ENCODE measurements at regions of chr12 and their contacts with region 1.

Region 1: DNA sequence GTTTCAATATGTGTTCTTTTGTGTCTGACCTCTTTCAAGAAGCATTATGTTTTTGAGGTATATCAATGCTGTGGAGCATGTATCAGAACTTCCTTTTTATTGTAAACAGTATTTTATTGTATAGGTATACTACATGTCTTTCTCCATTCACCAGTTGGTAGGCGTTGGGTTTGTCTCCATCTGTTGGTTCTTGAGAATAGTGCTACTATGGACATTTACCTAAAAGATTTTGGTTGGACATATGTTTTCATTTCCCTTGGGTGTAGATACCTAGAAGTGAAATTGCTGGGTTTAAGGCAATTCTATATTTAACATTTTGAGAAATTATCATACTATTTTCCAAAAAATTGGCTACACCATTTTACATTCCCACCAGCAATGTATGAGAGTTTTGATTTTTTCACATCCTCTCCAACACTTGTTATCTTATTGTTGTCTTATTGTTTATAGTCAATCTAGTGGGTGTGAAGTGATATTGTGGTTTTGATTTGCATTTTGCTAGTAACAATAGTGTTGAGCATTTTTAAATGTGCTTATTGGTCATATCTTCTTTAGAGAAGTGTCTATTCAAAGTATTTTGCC is 409.2 kb downstream of the IPO8 start:
- DNase-seq: peak; percentile 16
- H3K4me3 ChIP-seq: no peak overlapping the region
- H3K27ac ChIP-seq: no peak overlapping the region
- H3K4me1 ChIP-seq: no peaks in the 10 kb centered on the region
- H3K27me3 ChIP-seq: no peaks in the 10 kb centered on the region
- CTCF ChIP-seq: peak; percentile 69 to 75

Region 2: GRCh38 chr12:30000401-30000800 is 286.0 kb before region 1 on chr12:
- CTCF ChIA-PET with region 1: no interaction called
- dilution Hi-C with region 1: no loop called
- in situ Hi-C with region 1: no loop called
- intact Hi-C with region 1: loop called (anchors 1 kb)
- DNase-seq: no peak
- H3K4me3 ChIP-seq: no peak overlapping the region
- H3K27ac ChIP-seq: no peak overlapping the region
- H3K4me1 ChIP-seq: no peaks in the 10 kb centered on the region
- H3K27me3 ChIP-seq: no peaks in the 10 kb centered on the region
- CTCF ChIP-seq: no peak

Region 3: DNA sequence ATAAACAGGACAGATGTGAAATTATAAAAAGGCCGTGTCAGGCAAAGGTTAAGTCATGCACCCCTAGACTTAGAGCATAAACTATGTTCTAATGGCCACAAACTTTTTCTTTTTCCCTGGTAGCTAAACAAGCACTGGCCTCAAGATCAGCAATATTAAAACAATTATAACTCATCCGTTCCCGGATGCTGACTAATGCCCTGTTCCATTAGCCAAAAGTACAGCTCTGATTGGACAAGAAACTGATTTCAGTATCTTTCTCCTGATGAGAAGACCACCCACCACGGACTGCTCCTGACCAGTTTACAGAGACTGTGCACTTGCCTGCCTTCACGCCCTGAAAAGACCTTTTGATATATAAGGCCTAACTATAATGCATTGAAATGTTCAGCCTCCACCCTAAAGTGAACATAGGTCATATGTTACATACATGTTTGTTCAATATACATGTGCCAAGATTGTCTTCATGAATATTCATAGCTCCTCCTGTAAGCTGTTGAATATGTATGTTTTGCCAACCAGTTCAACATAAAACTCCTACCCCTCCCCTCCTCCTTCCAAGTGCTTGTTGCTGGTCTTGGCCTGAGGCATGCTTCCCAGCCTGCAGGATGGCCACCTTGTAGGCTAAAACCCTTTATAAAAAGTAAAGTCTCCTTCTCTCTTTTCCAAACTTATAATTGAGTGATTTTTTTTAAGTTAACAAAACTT is 247.3 kb after region 1 on chr12:
- CTCF ChIA-PET with region 1: no interaction called
- dilution Hi-C with region 1: no loop called
- in situ Hi-C with region 1: no loop called
- intact Hi-C with region 1: no loop called
- DNase-seq: no peak
- H3K4me3 ChIP-seq: no peak overlapping the region
- H3K27ac ChIP-seq: no peak overlapping the region
- H3K4me1 ChIP-seq: no peaks in the 10 kb centered on the region
- H3K27me3 ChIP-seq: no peaks in the 10 kb centered on the region
- CTCF ChIP-seq: no peak